Caco-2 (cell line): ENCODE measurements at regions of chr1 and their contacts with region 1.

Region 1: DNA sequence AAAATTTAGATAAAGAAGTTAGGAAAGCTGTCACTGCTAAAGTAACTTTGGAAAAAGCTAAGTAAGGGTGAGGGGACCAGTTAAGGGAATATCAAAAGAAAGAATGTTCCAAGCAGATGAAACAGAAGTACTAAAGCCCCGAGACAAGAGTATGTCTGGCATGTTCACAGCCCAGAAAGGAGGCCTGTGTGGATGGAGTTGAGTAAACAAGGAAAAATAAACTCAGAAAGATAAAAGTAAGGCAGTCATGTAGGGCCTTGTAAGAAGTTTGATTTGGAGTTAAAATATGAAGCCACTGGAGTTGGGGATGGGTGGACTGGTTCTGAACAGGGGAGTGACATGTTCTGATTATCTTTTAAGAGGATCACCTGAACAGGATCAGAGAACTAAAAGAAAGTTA is 177.9 kb downstream of the CDC42BPA start:
- DNase-seq: peak; percentile 60 to 68
- H3K4me3 ChIP-seq: no peak overlapping the region
- H3K4me3 Mint-ChIP-seq: no peak overlapping the region
- H3K27ac Mint-ChIP-seq: no peak overlapping the region
- H3K4me1 ChIP-seq: peaks cover 61% of the 10 kb centered on the region
- H3K4me1 Mint-ChIP-seq: peaks cover 18% of the 10 kb centered on the region
- H3K27me3 ChIP-seq: no peaks in the 10 kb centered on the region
- H3K27me3 Mint-ChIP-seq: no peaks in the 10 kb centered on the region
- CTCF ChIP-seq: no peak

Region 2: GRCh38 chr1:227156520-227156919 is 16.1 kb after region 1 on chr1:
- CTCF ChIA-PET with region 1: no interaction called
- POLR2A ChIA-PET with region 1: no interaction called
- intact Hi-C with region 1: no loop called
- DNase-seq: no peak
- H3K4me3 ChIP-seq: no peak overlapping the region
- H3K4me3 Mint-ChIP-seq: no peak overlapping the region
- H3K27ac Mint-ChIP-seq: no peak overlapping the region
- H3K4me1 ChIP-seq: no peaks in the 10 kb centered on the region
- H3K4me1 Mint-ChIP-seq: peaks cover 6% of the 10 kb centered on the region
- H3K27me3 ChIP-seq: no peaks in the 10 kb centered on the region
- H3K27me3 Mint-ChIP-seq: no peaks in the 10 kb centered on the region
- CTCF ChIP-seq: no peak

Region 3: DNA sequence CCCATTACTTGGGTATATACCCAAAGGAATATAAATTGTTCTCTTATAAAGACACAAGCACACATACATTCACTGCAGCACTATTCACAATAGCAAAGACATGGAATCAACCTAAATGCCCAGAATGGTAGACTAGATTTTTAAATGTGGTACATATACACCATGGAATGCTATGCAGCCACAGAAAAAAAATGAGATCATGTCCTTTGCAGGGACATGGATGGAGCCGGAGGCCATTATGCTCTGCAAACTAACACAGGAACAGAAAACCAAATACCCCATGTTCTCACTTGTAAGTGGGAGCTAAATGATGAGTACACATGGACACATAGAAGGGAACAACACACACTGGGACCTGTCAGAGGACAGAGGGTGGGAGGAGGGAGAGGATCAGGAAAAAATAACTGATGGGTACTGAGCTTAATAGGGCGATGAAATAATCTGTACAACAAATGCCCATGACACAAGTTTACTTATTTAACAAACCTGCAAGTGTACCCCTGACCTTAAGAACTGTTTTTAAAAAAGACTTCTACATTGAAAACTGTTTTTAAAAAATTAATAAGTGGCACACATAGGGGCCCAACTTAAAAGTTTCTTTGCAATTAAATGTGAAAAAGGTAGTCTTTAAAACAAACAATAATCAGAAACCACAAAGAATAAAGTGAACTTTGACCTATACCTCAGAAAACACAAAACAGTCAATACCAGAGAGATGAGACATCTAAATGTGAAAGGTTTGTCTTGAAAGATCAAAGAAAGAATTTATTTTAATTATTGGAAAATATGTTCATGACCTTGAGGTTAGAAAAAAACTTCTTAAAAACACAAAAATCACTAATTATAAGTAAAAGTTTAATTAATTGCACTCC is 102.7 kb after region 1 on chr1:
- CTCF ChIA-PET with region 1: no interaction called
- POLR2A ChIA-PET with region 1: no interaction called
- intact Hi-C with region 1: loop called (anchors 1 kb)
- DNase-seq: no peak
- H3K4me3 ChIP-seq: no peak overlapping the region
- H3K4me3 Mint-ChIP-seq: peak overlapping the region; percentile 64
- H3K27ac Mint-ChIP-seq: peak overlapping the region; percentile 50
- H3K4me1 ChIP-seq: peaks cover 48% of the 10 kb centered on the region
- H3K4me1 Mint-ChIP-seq: peaks cover 52% of the 10 kb centered on the region
- H3K27me3 ChIP-seq: no peaks in the 10 kb centered on the region
- H3K27me3 Mint-ChIP-seq: no peaks in the 10 kb centered on the region
- CTCF ChIP-seq: no peak